CD4-positive, alpha-beta memory T cell (primary cell): ENCODE measurements at regions of chr2 and their contacts with region 1.

Region 1: DNA sequence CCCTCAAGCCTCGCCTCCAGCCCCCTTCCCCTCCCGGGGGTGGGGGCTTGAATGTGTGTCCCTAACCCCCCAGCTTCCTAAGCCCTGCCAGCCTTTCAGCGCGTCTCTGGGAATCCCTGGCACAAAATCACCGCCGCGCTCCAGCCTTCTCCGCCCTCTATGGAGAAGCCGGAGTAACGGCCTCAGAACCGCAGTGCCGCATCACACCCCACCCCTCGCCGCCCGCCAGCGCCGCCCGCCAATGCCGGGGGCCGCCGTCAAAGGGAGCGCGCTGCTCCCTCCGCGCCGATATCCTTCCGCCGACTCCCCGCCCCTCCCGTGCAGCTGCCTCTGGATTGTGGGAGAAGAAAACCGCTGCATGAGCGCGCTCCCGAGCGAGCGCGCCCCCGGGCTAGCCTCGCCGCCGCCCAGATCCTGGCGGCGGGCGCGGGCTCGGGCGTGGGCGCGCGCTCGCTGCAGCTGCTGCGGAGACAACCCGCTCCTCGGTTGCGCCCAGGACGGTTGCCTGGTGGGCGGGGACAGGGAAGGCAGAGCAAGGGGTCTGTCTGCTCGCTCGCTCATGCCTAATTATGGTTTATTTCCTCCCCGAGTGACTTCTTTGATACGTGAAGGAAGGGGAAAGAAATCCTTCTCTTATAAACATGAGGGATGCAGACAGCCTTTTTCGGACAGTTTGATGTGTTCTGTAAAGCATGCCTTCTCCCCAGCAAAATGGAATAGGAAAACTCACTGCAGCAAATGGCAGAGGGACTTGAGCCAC is at the start of gene CCDC88A:
- DNase-seq: peak; percentile 86 to 88 (median 86)
- H3K4me3 ChIP-seq: peak within 1 kb of the TSS; percentile 85 to 94
- H3K4me3 Mint-ChIP-seq: peak within 1 kb of the TSS; percentile 77 to 96 (median 94)
- H3K27ac ChIP-seq: peak within 1 kb of the TSS; percentile 57
- H3K27ac Mint-ChIP-seq: peak within 1 kb of the TSS; percentile 83 to 95 (median 91)
- H3K4me1 ChIP-seq: peaks cover 21% of the 10 kb centered on the region
- H3K4me1 Mint-ChIP-seq: peaks cover 20 to 41% (median 30%) of the 10 kb centered on the region in 4 donors
- H3K27me3 ChIP-seq: no peaks in the 10 kb centered on the region
- H3K27me3 Mint-ChIP-seq: peaks cover 1 to 2% of the 10 kb centered on the region in 2 donors
- total RNA-seq, gene CCDC88A: 18.7 to 19.1 TPM

Region 2: GRCh38 chr2:55223958-55224760 is 195.7 kb before region 1 on chr2:
- CTCF ChIA-PET with region 1: interaction called, 3 read pairs
- POLR2A ChIA-PET with region 1: interaction called, 3 read pairs
- intact Hi-C with region 1: loop called (anchors 2 kb)
- DNase-seq: peak in 2 of 5 donors; percentile 21 to 39
- H3K4me3 ChIP-seq: no peak overlapping the region
- H3K4me3 Mint-ChIP-seq: peak overlapping the region; percentile 79 to 90 (median 86)
- H3K27ac ChIP-seq: peak overlapping the region; percentile 84
- H3K27ac Mint-ChIP-seq: peak overlapping the region; percentile 85 to 95 (median 93)
- H3K4me1 ChIP-seq: peaks cover 40% of the 10 kb centered on the region
- H3K4me1 Mint-ChIP-seq: peaks cover 32 to 55% (median 41%) of the 10 kb centered on the region in 4 donors
- H3K27me3 ChIP-seq: no peaks in the 10 kb centered on the region
- H3K27me3 Mint-ChIP-seq: no peaks in the 10 kb centered on the region

Region 3: DNA sequence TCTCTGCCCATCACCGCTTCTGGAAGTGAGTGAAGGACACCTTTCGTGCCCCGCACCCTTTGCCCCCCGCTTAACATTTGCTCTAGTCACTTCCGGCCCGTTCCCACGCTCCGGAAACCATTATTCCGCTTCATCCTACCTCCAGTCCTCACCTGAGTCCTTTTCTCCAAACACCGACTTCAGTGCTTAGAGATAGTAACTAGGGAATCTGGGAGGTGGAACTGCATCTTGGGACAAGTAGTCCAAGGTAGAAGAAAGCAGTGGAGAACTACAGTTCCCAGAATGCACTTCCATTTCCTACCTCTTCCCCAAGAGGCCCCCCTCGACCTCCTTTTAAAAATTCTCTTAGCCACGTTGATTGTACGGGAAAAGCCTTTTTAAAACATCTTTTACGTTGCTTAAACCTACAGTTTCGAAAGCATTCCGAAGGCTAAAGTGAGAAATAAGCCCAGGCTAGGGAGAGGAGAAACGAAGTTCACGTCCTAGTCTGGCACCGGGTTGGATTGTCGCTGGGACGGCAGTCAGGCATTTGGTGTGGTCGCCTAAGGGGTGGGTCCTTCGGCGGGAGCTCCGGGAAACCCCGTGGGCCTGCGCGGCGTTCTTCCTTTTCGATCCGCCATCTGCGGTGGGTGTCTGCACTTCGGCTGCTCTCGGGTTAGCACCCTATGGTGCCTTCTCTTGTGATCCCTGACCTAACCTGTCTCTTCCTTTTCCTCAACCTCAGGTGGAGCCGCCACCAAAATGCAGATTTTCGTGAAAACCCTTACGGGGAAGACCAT is 187.6 kb before region 1 on chr2 and contains the starts of genes CLHC1 and RPS27A:
- CTCF ChIA-PET with region 1: no interaction called
- POLR2A ChIA-PET with region 1: interaction called, 6 read pairs
- intact Hi-C with region 1: loop called (anchors 1 kb)
- DNase-seq: peak; percentile 92 to 96 (median 94)
- H3K4me3 ChIP-seq: peak within 1 kb of the TSS; percentile 82 to 98
- H3K4me3 Mint-ChIP-seq: peak within 1 kb of the TSS; percentile 92 to 100 (median 100)
- H3K27ac ChIP-seq: peak within 1 kb of the TSS; percentile 97
- H3K27ac Mint-ChIP-seq: peak within 1 kb of the TSS; percentile 94 to 100 (median 98)
- H3K4me1 ChIP-seq: peaks cover 52% of the 10 kb centered on the region
- H3K4me1 Mint-ChIP-seq: peaks cover 46 to 75% (median 62%) of the 10 kb centered on the region in 4 donors
- H3K27me3 ChIP-seq: no peaks in the 10 kb centered on the region
- H3K27me3 Mint-ChIP-seq: no peaks in the 10 kb centered on the region
- total RNA-seq, gene CLHC1: 12.4 to 14.2 TPM
- total RNA-seq, gene RPS27A: 2,280 to 2,392 TPM

Region 4: DNA sequence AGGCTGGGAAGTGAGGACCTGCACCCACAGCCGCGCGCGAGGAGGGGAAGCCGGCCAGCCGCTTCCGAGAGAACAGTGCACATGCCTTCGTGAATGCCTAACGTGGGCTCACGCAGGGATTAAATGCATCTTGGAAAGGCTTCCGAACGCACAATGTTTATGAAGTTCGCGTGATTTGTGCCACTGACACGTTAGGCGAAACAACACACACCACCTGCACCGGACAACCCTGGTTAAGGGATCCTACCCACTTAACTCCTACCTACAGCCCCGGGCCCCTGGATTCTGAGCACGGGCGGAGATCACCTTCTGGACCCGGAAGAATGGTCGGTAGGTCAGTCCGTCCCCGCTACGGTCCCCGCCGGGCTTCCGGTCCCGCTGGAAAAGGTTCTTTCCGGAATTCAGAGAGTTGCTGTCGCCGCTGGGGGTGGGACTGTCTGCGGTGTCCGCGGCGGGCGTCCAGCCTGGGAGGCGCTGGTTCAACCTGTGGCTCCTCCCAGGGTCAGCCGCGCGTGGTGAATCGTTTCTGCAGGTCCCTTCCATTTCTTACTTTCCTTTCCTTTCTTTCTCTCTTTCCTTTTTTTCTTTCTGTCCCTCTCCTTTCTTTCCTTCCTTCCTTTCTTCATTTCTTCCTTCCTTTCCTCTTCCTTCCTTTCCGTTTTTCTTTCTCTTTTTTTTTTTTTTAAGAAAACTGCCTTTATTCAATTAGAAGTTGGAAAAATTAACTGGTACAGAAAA is 150.8 kb before region 1 on chr2 and contains the start of gene MTIF2:
- CTCF ChIA-PET with region 1: no interaction called
- POLR2A ChIA-PET with region 1: interaction called, 4 read pairs
- intact Hi-C with region 1: loop called (anchors 5 kb)
- DNase-seq: peak; percentile 79 to 87 (median 80)
- H3K4me3 ChIP-seq: peak within 1 kb of the TSS; percentile 71 to 74
- H3K4me3 Mint-ChIP-seq: peak within 1 kb of the TSS; percentile 86 to 98 (median 96)
- H3K27ac ChIP-seq: peak within 1 kb of the TSS; percentile 67
- H3K27ac Mint-ChIP-seq: peak within 1 kb of the TSS; percentile 86 to 98 (median 97)
- H3K4me1 ChIP-seq: peaks cover 21% of the 10 kb centered on the region
- H3K4me1 Mint-ChIP-seq: peaks cover 11 to 37% (median 20%) of the 10 kb centered on the region in 4 donors
- H3K27me3 ChIP-seq: no peaks in the 10 kb centered on the region
- H3K27me3 Mint-ChIP-seq: no peaks in the 10 kb centered on the region
- total RNA-seq, gene MTIF2: 33.1 to 38.6 TPM

Region 5: DNA sequence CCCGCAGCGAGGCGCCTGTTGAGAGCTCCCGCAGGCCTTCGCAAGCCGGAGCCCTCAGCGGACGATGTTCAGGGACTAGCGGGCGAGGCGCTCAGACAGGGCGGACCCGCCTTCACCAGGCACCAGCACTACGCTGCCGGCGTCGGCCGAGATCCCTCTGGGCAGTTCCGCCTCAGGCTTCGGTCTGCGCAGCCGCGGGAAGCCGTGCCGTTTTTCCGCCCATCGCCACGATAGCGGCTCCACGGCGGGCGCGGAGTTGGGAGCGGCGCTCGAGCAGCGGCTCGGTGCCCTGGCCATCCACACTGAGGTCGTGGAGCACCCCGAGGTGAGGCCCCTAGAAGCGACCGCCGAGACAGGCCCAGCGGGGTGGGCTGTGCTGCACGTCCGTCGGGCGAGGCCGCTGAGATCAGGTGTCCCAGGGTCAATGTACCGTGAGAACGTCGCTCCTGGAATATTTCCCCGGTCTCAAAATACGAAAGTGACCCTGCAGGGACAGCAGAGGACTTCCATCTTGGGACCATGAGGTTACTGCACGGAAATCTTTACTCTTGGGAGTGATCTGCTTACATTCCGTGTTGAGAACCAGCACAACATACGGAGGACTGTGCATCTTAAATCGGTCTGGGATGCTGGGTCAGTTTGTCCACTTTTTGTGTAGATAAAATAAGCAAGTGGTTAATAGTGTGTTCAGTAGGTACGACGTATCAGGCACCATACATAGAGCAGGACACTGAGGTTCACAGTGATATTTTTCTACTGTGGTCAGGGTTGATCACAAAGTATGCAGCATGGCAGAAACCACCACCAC is 137.5 kb before region 1 on chr2:
- CTCF ChIA-PET with region 1: no interaction called
- POLR2A ChIA-PET with region 1: interaction called, 4 read pairs
- intact Hi-C with region 1: loop called (anchors 2 kb)
- DNase-seq: peak; percentile 86 to 87 (median 86)
- H3K4me3 ChIP-seq: peak overlapping the region; percentile 26 to 90
- H3K4me3 Mint-ChIP-seq: peak overlapping the region; percentile 92 to 96 (median 94)
- H3K27ac ChIP-seq: peak overlapping the region; percentile 62
- H3K27ac Mint-ChIP-seq: peak overlapping the region; percentile 93 to 99 (median 98)
- H3K4me1 ChIP-seq: peaks cover 18% of the 10 kb centered on the region
- H3K4me1 Mint-ChIP-seq: peaks cover 13 to 38% (median 26%) of the 10 kb centered on the region in 4 donors
- H3K27me3 ChIP-seq: no peaks in the 10 kb centered on the region
- H3K27me3 Mint-ChIP-seq: no peaks in the 10 kb centered on the region

Region 6: DNA sequence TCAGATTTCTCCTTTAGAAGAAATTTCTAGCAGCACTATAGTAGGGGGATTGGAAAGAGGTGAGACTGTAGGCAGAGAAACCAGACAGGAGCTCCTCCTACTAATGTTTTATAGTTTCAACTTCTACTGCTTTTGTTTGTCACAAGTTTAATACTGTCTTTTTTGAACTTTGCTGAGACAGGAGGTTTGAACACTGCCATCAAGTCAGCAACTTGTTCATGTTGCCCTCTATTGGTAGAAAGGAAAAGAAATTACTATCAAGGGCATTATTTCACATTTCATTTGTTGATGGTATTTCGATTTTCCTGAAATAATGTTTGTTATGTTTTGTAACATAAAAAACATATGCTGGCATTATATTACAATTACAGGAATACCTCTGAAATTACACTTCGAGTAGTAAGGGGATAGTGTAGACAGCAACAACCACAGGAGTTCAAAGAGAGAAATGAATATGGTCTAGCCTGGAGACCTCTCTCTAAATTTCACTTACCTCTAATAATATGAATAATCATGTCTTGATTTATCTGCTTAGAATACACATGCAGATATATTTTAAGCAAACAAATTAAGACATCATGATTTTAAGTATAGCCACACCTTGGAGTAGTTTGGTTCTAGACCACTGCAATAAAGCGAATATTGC is 12.2 kb after region 1 on chr2:
- CTCF ChIA-PET with region 1: no interaction called
- POLR2A ChIA-PET with region 1: interaction called, 11 read pairs
- intact Hi-C with region 1: no loop called
- DNase-seq: peak in 4 of 5 donors; percentile 27 to 45 (median 35)
- H3K4me3 ChIP-seq: no peak overlapping the region
- H3K4me3 Mint-ChIP-seq: no peak overlapping the region
- H3K27ac ChIP-seq: no peak overlapping the region
- H3K27ac Mint-ChIP-seq: peak overlapping the region in 1 of 7 donors; percentile 48
- H3K4me1 ChIP-seq: no peaks in the 10 kb centered on the region
- H3K4me1 Mint-ChIP-seq: peaks cover 0 to 5% (median 2%) of the 10 kb centered on the region in 4 donors
- H3K27me3 ChIP-seq: no peaks in the 10 kb centered on the region
- H3K27me3 Mint-ChIP-seq: peaks cover 0 to 3% of the 10 kb centered on the region in 2 donors

Region 7: DNA sequence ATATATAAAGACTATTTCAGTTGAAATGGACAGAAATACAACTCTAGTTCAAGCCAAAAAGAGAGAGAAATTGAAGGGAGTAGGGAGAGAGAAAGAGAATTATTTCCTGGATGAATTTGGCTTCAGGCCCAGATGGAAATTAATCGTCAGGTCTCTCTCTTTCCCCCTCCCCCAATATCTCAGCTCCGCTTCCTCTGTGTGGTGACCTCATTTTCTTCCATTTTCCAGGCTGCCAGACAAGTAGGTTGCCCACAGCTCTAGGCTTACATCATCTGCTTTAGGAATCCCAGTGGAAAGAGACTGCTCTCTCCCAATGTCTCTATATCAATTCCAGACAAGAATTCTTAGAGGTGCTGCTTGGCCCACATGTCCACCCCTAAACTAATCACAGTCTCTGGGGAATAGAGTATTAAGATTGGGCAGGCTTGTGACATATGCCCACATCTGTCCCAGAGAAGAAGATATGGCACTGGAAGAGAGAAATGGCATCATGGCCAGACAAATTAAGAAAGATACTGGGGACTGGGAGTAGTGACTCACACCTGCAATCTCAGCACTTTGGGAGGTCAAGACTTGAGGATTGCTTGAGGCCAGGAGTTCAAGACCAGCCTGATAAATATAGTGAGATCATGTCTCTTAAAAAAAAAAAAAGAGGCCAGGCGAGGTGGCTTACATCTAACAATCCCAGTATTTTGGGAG is 62.5 kb after region 1 on chr2:
- CTCF ChIA-PET with region 1: no interaction called
- POLR2A ChIA-PET with region 1: no interaction called
- intact Hi-C with region 1: no loop called
- DNase-seq: no peak
- H3K4me3 ChIP-seq: no peak overlapping the region
- H3K4me3 Mint-ChIP-seq: peak overlapping the region in 1 of 8 donors; percentile 18
- H3K27ac ChIP-seq: no peak overlapping the region
- H3K27ac Mint-ChIP-seq: no peak overlapping the region
- H3K4me1 ChIP-seq: no peaks in the 10 kb centered on the region
- H3K4me1 Mint-ChIP-seq: no peaks in the 10 kb centered on the region
- H3K27me3 ChIP-seq: no peaks in the 10 kb centered on the region
- H3K27me3 Mint-ChIP-seq: peaks cover 0 to 5% of the 10 kb centered on the region in 2 donors

Region 8: DNA sequence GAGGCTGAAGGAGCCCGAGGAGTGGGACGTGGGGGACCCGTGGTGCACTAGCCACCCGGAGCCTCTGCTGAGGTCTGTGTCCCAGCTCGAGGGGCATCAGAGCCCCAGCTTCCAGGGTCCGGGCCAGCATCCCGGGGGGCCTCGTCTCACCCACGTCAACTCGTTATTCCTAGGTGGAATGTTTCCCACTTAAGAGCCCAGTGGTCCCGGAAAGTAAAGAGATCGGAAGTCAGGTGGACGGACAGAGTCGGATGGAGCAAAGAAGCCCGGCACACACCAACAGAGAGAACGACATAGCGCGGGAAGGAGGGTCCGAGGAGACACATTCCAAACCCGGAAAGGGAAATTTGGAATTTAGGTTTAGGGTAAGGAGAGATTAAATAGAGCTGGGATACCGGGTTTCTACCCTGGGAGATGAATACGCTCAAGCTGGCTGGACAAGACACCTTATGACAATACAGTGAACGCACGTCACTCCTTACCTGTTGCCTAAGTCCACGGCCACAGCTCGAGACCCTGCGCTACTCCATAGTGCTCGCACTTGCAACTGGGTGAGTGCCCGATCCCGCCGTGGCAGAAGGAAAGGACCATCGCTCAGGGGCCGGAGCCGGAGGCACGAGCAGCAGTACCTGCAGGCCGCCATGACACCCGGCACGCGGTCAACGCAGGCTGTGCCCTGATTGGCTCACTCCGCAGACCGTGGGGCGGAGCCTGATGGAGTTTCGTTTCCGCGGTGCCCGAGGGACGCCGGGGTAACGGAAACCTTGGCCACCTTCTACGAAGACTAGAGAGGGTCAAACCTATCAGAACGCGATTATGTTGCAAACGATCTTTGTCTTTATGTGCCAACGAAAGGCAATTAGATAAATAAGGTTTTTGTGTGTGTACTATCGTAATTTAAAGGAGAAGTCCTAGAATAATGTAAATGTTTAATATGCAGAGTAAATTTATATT is 273.6 kb after region 1 on chr2 and contains the start of gene PNPT1:
- CTCF ChIA-PET with region 1: no interaction called
- POLR2A ChIA-PET with region 1: no interaction called
- intact Hi-C with region 1: loop called (anchors 5 kb)
- DNase-seq: peak; percentile 89 to 91 (median 89)
- H3K4me3 ChIP-seq: peak within 1 kb of the TSS; percentile 78 to 94
- H3K4me3 Mint-ChIP-seq: peak within 1 kb of the TSS; percentile 96 to 98 (median 98)
- H3K27ac ChIP-seq: peak within 1 kb of the TSS; percentile 74
- H3K27ac Mint-ChIP-seq: peak within 1 kb of the TSS; percentile 90 to 97 (median 93)
- H3K4me1 ChIP-seq: peaks cover 16% of the 10 kb centered on the region
- H3K4me1 Mint-ChIP-seq: peaks cover 29 to 44% (median 32%) of the 10 kb centered on the region in 4 donors
- H3K27me3 ChIP-seq: no peaks in the 10 kb centered on the region
- H3K27me3 Mint-ChIP-seq: peaks cover 0 to under 1% of the 10 kb centered on the region in 2 donors
- total RNA-seq, gene PNPT1: 21.9 to 26.5 TPM